B cell (primary cell): ENCODE measurements at regions of chr2 and their contacts with region 1.

Region 1: GRCh38 chr2:163345908-163346573 is 389.8 kb downstream of the FIGN start:
- DNase-seq: peak; percentile 55
- ATAC-seq: peak; percentile 33
- H3K4me3 ChIP-seq: no peak overlapping the region
- H3K4me3 Mint-ChIP-seq: no peak overlapping the region
- H3K27ac ChIP-seq: no peak overlapping the region
- H3K27ac Mint-ChIP-seq: no peak overlapping the region
- H3K4me1 ChIP-seq: peaks cover 0 to 11% of the 10 kb centered on the region in 2 donors
- H3K4me1 Mint-ChIP-seq: peaks cover 10% of the 10 kb centered on the region
- H3K27me3 ChIP-seq: no peaks in the 10 kb centered on the region
- H3K27me3 Mint-ChIP-seq: peaks cover 5% of the 10 kb centered on the region
- CTCF ChIP-seq: peak; percentile 85

Region 2: GRCh38 chr2:162926501-162926900 is 419.5 kb before region 1 on chr2:
- CTCF ChIA-PET with region 1: no interaction called
- POLR2A ChIA-PET with region 1: no interaction called
- intact Hi-C with region 1: no loop called
- DNase-seq: no peak
- ATAC-seq: no peak
- H3K4me3 ChIP-seq: no peak overlapping the region
- H3K4me3 Mint-ChIP-seq: no peak overlapping the region
- H3K27ac ChIP-seq: no peak overlapping the region
- H3K27ac Mint-ChIP-seq: no peak overlapping the region
- H3K4me1 ChIP-seq: no peaks in the 10 kb centered on the region
- H3K4me1 Mint-ChIP-seq: no peaks in the 10 kb centered on the region
- H3K27me3 ChIP-seq: no peaks in the 10 kb centered on the region
- H3K27me3 Mint-ChIP-seq: no peaks in the 10 kb centered on the region
- CTCF ChIP-seq: no peak

Region 3: DNA sequence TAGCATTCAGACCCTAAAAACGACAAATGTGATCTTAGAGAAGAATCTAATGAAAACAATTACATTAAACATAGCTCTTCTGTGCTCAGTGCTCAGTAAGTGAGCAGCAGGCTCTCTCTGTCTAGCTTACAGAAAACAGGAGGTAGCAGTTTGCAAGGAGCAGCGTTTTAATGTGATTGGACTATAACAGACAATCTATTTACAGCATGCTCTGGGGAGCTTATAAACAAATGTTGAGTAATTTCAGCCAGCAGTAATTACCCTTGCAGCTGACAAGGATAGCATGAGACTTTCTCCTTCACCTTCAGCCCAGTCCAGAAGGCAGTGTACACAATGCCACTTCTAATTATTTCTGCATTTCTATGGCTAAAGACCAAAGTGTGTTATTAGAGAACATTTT is 119.4 kb after region 1 on chr2:
- CTCF ChIA-PET with region 1: no interaction called
- POLR2A ChIA-PET with region 1: no interaction called
- intact Hi-C with region 1: no loop called
- DNase-seq: no peak
- ATAC-seq: no peak
- H3K4me3 ChIP-seq: no peak overlapping the region
- H3K4me3 Mint-ChIP-seq: no peak overlapping the region
- H3K27ac ChIP-seq: no peak overlapping the region
- H3K27ac Mint-ChIP-seq: no peak overlapping the region
- H3K4me1 ChIP-seq: no peaks in the 10 kb centered on the region
- H3K4me1 Mint-ChIP-seq: peaks cover 1% of the 10 kb centered on the region
- H3K27me3 ChIP-seq: no peaks in the 10 kb centered on the region
- H3K27me3 Mint-ChIP-seq: peaks cover 22% of the 10 kb centered on the region
- CTCF ChIP-seq: no peak

Region 4: DNA sequence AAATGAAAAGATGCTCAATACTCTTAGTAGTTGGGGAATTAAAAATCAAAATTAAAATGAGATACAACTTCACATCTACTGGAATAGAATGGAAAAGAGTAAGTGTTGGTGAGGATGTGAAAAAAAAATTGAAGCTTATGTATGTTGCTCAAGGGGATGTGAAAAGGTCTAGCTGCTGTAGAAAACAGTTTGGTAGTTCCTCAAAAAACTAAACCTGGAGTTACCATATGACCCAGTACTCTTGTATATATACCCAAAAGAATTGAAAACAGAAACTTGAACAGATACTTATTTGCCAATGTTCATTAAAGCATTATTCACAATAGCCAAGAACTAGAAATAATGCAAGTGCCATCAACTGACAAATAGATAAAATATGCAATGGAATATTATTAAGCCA is 181.3 kb after region 1 on chr2:
- CTCF ChIA-PET with region 1: no interaction called
- POLR2A ChIA-PET with region 1: no interaction called
- intact Hi-C with region 1: no loop called
- DNase-seq: no peak
- ATAC-seq: no peak
- H3K4me3 ChIP-seq: no peak overlapping the region
- H3K4me3 Mint-ChIP-seq: no peak overlapping the region
- H3K27ac ChIP-seq: no peak overlapping the region
- H3K27ac Mint-ChIP-seq: no peak overlapping the region
- H3K4me1 ChIP-seq: no peaks in the 10 kb centered on the region
- H3K4me1 Mint-ChIP-seq: no peaks in the 10 kb centered on the region
- H3K27me3 ChIP-seq: no peaks in the 10 kb centered on the region
- H3K27me3 Mint-ChIP-seq: no peaks in the 10 kb centered on the region
- CTCF ChIP-seq: no peak

Region 5: DNA sequence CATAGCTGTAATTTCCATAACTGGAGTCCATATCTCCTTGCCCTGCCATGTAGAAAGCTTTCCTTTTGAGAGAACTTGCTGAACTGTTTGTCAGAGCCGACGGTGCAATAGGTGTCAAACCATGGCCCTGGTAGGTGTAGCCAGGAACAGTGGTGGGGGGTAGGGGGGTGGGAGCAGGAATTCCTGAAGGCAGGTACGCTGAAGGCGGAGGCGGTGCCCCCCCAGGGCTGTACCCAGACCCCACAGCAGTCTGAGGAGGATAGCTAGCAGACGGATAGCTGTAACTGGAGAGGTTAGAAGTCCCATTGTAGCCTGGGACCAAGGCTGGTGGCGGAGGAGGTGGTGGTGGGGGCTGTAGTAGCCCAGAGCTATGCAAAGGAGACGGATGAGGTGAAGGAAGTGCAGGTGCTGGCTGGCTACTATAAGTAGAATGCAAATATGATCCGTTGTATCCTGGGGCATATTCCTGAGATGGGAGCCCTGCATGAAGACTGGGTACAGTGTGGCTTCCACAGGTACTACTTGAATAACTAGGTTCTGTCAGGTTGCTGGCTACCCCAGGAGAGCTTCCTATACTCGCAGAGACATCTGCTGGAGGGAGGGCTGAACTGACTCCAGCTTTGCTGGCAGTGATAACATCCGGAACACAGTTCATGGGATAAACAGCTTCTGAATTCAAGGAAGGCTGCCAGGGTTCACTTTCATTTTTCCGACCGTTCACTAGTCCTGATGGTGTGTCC is 264.9 kb after region 1 on chr2:
- CTCF ChIA-PET with region 1: interaction called, 4 read pairs
- POLR2A ChIA-PET with region 1: no interaction called
- intact Hi-C with region 1: loop called (anchors 10 kb)
- DNase-seq: peak; percentile 6
- ATAC-seq: no peak
- H3K4me3 ChIP-seq: no peak overlapping the region
- H3K4me3 Mint-ChIP-seq: no peak overlapping the region
- H3K27ac ChIP-seq: no peak overlapping the region
- H3K27ac Mint-ChIP-seq: no peak overlapping the region
- H3K4me1 ChIP-seq: no peaks in the 10 kb centered on the region
- H3K4me1 Mint-ChIP-seq: no peaks in the 10 kb centered on the region
- H3K27me3 ChIP-seq: no peaks in the 10 kb centered on the region
- H3K27me3 Mint-ChIP-seq: no peaks in the 10 kb centered on the region
- CTCF ChIP-seq: no peak

Region 6: GRCh38 chr2:164061129-164061746 is 715.2 kb after region 1 on chr2:
- CTCF ChIA-PET with region 1: no interaction called
- POLR2A ChIA-PET with region 1: no interaction called
- intact Hi-C with region 1: loop called (anchors 10 kb)
- DNase-seq: peak; percentile 18
- ATAC-seq: no peak
- H3K4me3 ChIP-seq: no peak overlapping the region
- H3K4me3 Mint-ChIP-seq: no peak overlapping the region
- H3K27ac ChIP-seq: no peak overlapping the region
- H3K27ac Mint-ChIP-seq: no peak overlapping the region
- H3K4me1 ChIP-seq: no peaks in the 10 kb centered on the region
- H3K4me1 Mint-ChIP-seq: no peaks in the 10 kb centered on the region
- H3K27me3 ChIP-seq: no peaks in the 10 kb centered on the region
- H3K27me3 Mint-ChIP-seq: no peaks in the 10 kb centered on the region
- CTCF ChIP-seq: no peak

Region 7: GRCh38 chr2:164523009-164523408 is 1177.0 kb after region 1 on chr2:
- CTCF ChIA-PET with region 1: no interaction called
- POLR2A ChIA-PET with region 1: no interaction called
- intact Hi-C with region 1: no loop called
- DNase-seq: no peak
- ATAC-seq: no peak
- H3K4me3 ChIP-seq: no peak overlapping the region
- H3K4me3 Mint-ChIP-seq: no peak overlapping the region
- H3K27ac ChIP-seq: no peak overlapping the region
- H3K27ac Mint-ChIP-seq: no peak overlapping the region
- H3K4me1 ChIP-seq: no peaks in the 10 kb centered on the region
- H3K4me1 Mint-ChIP-seq: no peaks in the 10 kb centered on the region
- H3K27me3 ChIP-seq: no peaks in the 10 kb centered on the region
- H3K27me3 Mint-ChIP-seq: no peaks in the 10 kb centered on the region
- CTCF ChIP-seq: no peak